SK-N-SH (cell line): ENCODE measurements at regions of chr9 and their contacts with region 1.

Region 1: DNA sequence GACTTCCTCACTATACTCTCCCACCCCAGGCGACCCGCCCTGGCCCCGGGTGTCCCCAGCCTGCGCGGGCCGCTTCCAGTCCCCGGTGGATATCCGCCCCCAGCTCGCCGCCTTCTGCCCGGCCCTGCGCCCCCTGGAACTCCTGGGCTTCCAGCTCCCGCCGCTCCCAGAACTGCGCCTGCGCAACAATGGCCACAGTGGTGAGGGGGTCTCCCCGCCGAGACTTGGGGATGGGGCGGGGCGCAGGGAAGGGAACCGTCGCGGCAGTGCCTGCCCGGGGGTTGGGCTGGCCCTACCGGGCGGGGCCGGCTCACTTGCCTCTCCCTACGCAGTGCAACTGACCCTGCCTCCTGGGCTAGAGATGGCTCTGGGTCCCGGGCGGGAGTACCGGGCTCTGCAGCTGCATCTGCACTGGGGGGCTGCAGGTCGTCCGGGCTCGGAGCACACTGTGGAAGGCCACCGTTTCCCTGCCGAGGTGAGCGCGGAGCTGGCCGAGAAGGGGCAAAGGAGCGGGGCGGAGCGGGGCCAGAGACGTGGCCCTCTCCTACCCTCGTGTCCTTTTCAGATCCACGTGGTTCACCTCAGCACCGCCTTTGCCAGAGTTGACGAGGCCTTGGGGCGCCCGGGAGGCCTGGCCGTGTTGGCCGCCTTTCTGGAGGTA is 2.1 kb downstream of the CA9 start:
- DNase-seq: peak; percentile 96
- H3K4me3 ChIP-seq: peak overlapping the region; percentile 19 to 38; a peak in 2 of 4 replicates
- H3K27ac ChIP-seq: no peak overlapping the region; a peak in 1 of 4 replicates
- H3K4me1 ChIP-seq: peaks cover 0 to 13% of the 10 kb centered on the region in 2 experiments; a peak in 1 of 4 replicates
- H3K27me3 ChIP-seq: no peaks in the 10 kb centered on the region
- CTCF ChIP-seq: no peak
- EP300 ChIP-seq: no peak
- RAD21 ChIP-seq: no peak

Region 2: GRCh38 chr9:35664531-35665470 is 11.1 kb before region 1 on chr9 and contains the start of gene ARHGEF39:
- CTCF ChIA-PET with region 1: interaction called, 23 read pairs
- POLR2A ChIA-PET with region 1: interaction called, 11 read pairs
- DNase-seq: peak; percentile 98
- H3K4me3 ChIP-seq: peak within 1 kb of the TSS; percentile 61 to 65
- H3K27ac ChIP-seq: peak within 1 kb of the TSS; percentile 53 to 80
- H3K4me1 ChIP-seq: peaks cover 0 to 12% of the 10 kb centered on the region in 2 experiments; a peak in 1 of 4 replicates
- H3K27me3 ChIP-seq: no peaks in the 10 kb centered on the region
- CTCF ChIP-seq: peak; percentile 55
- EP300 ChIP-seq: peak in 1 of 2 experiments; percentile 53; a peak in 2 of 4 replicates
- RAD21 ChIP-seq: no peak; the same call in 1 of the 2 replicates
- polyA plus RNA-seq, gene ARHGEF39: 4.9 and 5.2 TPM in 2 replicates